HAP-1 (cell line): ENCODE measurements at regions of chr5 and their contacts with region 1.

Region 1: GRCh38 chr5:159316519-159317383 is 13.5 kb downstream of the IL12B start:
- DNase-seq: peak; percentile 36 to 63
- H3K4me3 ChIP-seq: no peak overlapping the region
- H3K4me1 ChIP-seq: no peaks in the 10 kb centered on the region
- H3K27me3 ChIP-seq: no peaks in the 10 kb centered on the region

Region 2: DNA sequence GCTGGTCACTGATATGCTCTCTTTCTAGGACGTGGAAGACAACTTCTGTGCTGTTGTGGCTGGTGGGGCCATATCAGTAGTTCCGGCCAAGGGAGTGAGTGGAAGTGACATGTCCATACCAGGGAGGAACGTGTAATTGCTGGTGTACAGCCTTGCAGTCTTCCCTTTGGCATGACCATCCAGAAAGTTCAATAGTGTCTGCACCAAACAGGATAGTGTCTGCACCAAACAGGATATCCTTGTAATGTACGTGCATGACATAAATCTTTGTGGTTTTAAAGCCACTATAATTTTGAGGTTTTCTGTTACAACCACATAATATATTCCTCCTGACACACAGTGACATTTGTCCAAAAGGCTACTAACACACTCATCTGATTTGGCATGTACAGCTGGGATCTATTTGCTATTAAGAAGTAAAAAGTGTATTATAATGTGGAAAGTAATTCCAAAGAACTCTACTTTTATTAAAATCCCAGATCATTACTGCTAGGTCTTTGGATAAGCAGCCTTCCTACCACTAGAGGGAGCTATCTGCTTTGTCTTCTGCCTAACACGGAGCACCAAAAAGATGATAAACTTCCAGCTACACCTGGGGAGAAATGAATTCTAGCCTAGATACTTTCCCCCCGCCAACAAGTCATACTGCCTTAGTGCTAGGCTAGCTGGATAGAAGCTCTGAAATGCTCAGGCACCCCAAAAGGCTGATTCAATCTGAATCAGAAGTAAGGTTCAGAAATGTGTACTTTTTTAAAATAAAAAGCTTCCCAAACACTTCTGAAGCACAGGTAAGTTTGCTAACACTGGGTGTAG is 160.1 kb before region 1 on chr5:
- in situ Hi-C with region 1: loop called (anchors 10 kb)
- DNase-seq: peak; percentile 57 to 65
- H3K4me3 ChIP-seq: no peak overlapping the region
- H3K4me1 ChIP-seq: no peaks in the 10 kb centered on the region
- H3K27me3 ChIP-seq: no peaks in the 10 kb centered on the region

Region 3: GRCh38 chr5:159531554-159532105 is 214.9 kb after region 1 on chr5:
- in situ Hi-C with region 1: no loop called
- DNase-seq: no peak
- H3K4me3 ChIP-seq: no peak overlapping the region
- H3K4me1 ChIP-seq: no peaks in the 10 kb centered on the region
- H3K27me3 ChIP-seq: no peaks in the 10 kb centered on the region